ENCODE measurements at regions of chr7 and their contacts with region 1.

Region 1: GRCh38 chr7:91784463-91784862 is 96.0 kb downstream of the MTERF1 start:
- DNase-seq: no peak
- ATAC-seq: no peak

Region 2: DNA sequence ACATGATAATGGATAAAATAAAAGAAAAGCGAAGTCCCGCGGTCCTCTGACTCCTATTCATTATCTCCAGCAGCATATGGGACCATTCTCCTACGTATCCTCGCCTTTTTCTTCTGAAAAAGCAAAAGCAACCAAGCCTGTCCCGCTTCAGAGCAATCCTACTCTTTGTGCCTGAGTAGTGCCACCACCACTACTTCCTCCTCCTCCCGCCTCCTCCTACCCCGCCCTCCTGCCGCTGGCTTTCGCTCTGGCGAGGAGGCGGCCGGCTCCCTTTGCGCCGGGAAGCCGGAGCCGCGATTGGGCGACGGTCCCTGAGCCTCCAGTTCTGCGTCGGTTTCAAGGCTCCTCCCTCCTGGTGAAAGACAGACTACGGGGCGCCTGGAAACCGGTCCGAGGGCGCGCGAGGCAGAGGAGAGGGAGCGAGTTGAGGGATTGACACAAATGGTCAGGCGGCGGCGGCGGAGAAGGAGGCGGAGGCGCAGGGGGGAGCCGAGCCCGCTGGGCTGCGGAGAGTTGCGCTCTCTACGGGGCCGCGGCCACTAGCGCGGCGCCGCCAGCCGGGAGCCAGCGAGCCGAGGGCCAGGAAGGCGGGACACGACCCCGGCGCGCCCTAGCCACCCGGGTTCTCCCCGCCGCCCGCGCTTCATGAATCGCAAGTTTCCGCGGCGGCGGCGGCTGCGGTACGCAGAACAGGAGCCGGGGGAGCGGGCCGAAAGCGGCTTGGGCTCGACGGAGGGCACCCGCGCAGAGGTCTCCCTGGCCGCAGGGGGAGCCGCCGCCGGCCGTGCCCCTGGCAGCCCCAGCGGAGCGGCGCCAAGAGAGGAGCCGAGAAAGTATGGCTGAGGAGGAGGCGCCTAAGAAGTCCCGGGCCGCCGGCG is 520.2 kb before region 1 on chr7 and contains the start of gene FZD1:
- intact Hi-C with region 1: loop called (anchors 5 kb)
- DNase-seq: peak; percentile 97
- ATAC-seq: peak; percentile 98
- total RNA-seq, gene FZD1: 10.3 TPM

Region 3: GRCh38 chr7:91683823-91684222 is 100.6 kb before region 1 on chr7:
- intact Hi-C with region 1: loop called (anchors 5 kb)
- DNase-seq: no peak
- ATAC-seq: peak; percentile 82

Region 4: GRCh38 chr7:92057362-92057761 is 272.9 kb after region 1 on chr7:
- intact Hi-C with region 1: no loop called
- DNase-seq: no peak
- ATAC-seq: peak; percentile 46